ENCODE measurements at regions of chr7 and their contacts with region 1.

Region 1: GRCh38 chr7:142323706-142324105 is 65.8 kb upstream of the PRSS58 start:
- DNase-seq: peak; percentile 81
- H3K4me3 Mint-ChIP-seq: peak overlapping the region; percentile 41
- H3K27ac Mint-ChIP-seq: peak overlapping the region; percentile 73
- H3K4me1 Mint-ChIP-seq: peaks cover 29% of the 10 kb centered on the region
- H3K27me3 Mint-ChIP-seq: no peaks in the 10 kb centered on the region

Region 2: DNA sequence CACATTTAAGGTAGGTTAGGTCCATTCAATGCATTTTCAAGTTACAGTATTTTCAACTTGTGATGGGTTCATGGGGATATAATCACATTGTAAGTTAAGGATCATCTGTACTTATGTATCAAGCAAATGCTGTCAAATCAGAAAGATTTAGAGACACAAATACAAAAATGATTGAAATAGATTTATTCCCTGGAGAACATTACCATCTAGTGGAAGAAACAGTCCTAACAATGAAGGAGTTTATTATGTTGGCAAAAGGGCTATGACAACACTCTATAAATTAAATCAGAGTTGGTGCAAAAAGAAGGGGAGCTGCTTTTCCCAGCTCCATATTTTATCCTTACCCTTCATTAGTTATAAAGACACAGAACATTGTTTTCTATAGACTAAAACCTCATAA is 134.9 kb before region 1 on chr7:
- CTCF ChIA-PET with region 1: no interaction called
- intact Hi-C with region 1: no loop called
- DNase-seq: no peak
- H3K4me3 Mint-ChIP-seq: no peak overlapping the region
- H3K27ac Mint-ChIP-seq: no peak overlapping the region
- H3K4me1 Mint-ChIP-seq: peaks cover 2% of the 10 kb centered on the region
- H3K27me3 Mint-ChIP-seq: peaks cover 5% of the 10 kb centered on the region

Region 3: GRCh38 chr7:142231716-142232115 is 92.0 kb before region 1 on chr7:
- CTCF ChIA-PET with region 1: no interaction called
- intact Hi-C with region 1: no loop called
- DNase-seq: no peak
- H3K4me3 Mint-ChIP-seq: no peak overlapping the region
- H3K27ac Mint-ChIP-seq: no peak overlapping the region
- H3K4me1 Mint-ChIP-seq: no peaks in the 10 kb centered on the region
- H3K27me3 Mint-ChIP-seq: peaks cover 15% of the 10 kb centered on the region

Region 4: GRCh38 chr7:142301923-142302550 is 21.7 kb before region 1 on chr7:
- CTCF ChIA-PET with region 1: interaction called, 113 read pairs
- intact Hi-C with region 1: loop called (anchors 2 kb)
- DNase-seq: no peak
- H3K4me3 Mint-ChIP-seq: no peak overlapping the region
- H3K27ac Mint-ChIP-seq: no peak overlapping the region
- H3K4me1 Mint-ChIP-seq: peaks cover 30% of the 10 kb centered on the region
- H3K27me3 Mint-ChIP-seq: peaks cover 11% of the 10 kb centered on the region

Region 5: DNA sequence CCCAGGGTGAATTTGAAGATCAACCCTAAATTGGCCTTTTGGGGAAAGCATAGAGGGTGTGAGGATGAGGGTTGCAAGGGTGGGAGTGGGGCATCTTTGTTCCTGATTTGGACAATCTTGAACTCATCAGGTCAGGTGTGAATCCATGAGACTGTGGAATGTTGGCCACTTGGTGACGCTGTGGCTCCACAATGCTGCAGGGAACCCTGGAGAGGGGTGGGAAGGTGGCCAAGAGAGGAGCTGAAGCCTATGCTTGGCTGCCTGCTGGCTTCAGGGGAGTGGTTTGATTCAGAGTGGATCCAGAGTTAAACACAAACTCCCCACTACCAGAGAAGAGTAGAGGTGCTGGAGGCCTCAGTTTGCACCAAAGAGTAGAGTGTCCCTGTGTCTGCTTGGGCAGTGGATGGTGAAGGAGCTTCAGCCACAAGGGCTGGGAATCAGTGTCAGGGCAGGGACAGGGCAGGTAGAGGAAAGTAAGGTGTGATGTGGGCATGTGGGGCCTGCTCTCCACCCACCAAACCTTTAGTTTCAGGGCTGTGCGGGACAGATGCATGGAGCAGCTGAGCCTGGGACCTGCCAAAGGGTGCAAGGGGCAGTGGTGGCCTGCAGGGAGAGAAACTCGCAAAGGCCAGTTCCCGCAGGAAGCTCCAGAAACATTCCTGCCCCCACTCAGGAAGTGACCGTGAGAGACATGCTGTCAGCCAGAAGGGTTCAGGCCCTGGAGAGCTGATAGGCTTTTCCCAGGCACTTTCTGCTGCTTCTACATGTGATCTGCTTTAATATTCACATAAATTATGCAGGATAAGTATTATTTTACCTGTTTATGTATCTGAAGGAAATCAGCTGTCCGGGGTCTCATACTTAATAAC is 15.2 kb after region 1 on chr7:
- CTCF ChIA-PET with region 1: interaction called, 30 read pairs
- intact Hi-C with region 1: loop called (anchors 1 kb)
- DNase-seq: peak; percentile 64
- H3K4me3 Mint-ChIP-seq: no peak overlapping the region
- H3K27ac Mint-ChIP-seq: peak overlapping the region; percentile 73
- H3K4me1 Mint-ChIP-seq: peaks cover 19% of the 10 kb centered on the region
- H3K27me3 Mint-ChIP-seq: peaks cover 2% of the 10 kb centered on the region

Region 6: GRCh38 chr7:142352543-142352942 is 28.8 kb after region 1 on chr7:
- CTCF ChIA-PET with region 1: interaction called, 5 read pairs
- intact Hi-C with region 1: loop called (anchors 2 kb)
- DNase-seq: peak; percentile 52
- H3K4me3 Mint-ChIP-seq: peak overlapping the region; percentile 74
- H3K27ac Mint-ChIP-seq: peak overlapping the region; percentile 73
- H3K4me1 Mint-ChIP-seq: peaks cover 30% of the 10 kb centered on the region
- H3K27me3 Mint-ChIP-seq: no peaks in the 10 kb centered on the region

Region 7: GRCh38 chr7:142385491-142386340 is 62.0 kb after region 1 on chr7:
- CTCF ChIA-PET with region 1: interaction called, 6 read pairs
- intact Hi-C with region 1: loop called (anchors 2 kb)
- DNase-seq: peak; percentile 76
- H3K4me3 Mint-ChIP-seq: peak overlapping the region; percentile 32
- H3K27ac Mint-ChIP-seq: peak overlapping the region; percentile 84
- H3K4me1 Mint-ChIP-seq: peaks cover 26% of the 10 kb centered on the region
- H3K27me3 Mint-ChIP-seq: no peaks in the 10 kb centered on the region

Region 8: GRCh38 chr7:143263266-143264195 is 939.8 kb after region 1 on chr7 and contains the start of gene GSTK1:
- CTCF ChIA-PET with region 1: no interaction called
- intact Hi-C with region 1: no loop called
- DNase-seq: peak; percentile 90
- H3K4me3 Mint-ChIP-seq: peak within 1 kb of the TSS; percentile 96
- H3K27ac Mint-ChIP-seq: peak within 1 kb of the TSS; percentile 96
- H3K4me1 Mint-ChIP-seq: peaks cover 55% of the 10 kb centered on the region
- H3K27me3 Mint-ChIP-seq: no peaks in the 10 kb centered on the region
- total RNA-seq, gene GSTK1: 186 to 187 TPM

Measured in activated naive CD4-positive, alpha-beta T cell treated with anti-CD3 and anti-CD28 coated beads for 36 hours (primary cell).